ENCODE measurements at regions of chr1 and their contacts with region 1.

Region 1: GRCh38 chr1:26145041-26145959 is 13.6 kb upstream of the FAM110D start:
- DNase-seq: peak; percentile 89
- ATAC-seq: peak; percentile 93
- H3K4me3 ChIP-seq: no peak overlapping the region
- H3K27ac ChIP-seq: no peak overlapping the region
- H3K4me1 ChIP-seq: peaks cover 14 to 28% of the 10 kb centered on the region in 2 experiments
- H3K27me3 ChIP-seq: no peaks in the 10 kb centered on the region
- CTCF ChIP-seq: peak; percentile 71 to 95 (median 72)
- POLR2A ChIP-seq: no peak
- RAD21 ChIP-seq: peak; percentile 97

Region 2: DNA sequence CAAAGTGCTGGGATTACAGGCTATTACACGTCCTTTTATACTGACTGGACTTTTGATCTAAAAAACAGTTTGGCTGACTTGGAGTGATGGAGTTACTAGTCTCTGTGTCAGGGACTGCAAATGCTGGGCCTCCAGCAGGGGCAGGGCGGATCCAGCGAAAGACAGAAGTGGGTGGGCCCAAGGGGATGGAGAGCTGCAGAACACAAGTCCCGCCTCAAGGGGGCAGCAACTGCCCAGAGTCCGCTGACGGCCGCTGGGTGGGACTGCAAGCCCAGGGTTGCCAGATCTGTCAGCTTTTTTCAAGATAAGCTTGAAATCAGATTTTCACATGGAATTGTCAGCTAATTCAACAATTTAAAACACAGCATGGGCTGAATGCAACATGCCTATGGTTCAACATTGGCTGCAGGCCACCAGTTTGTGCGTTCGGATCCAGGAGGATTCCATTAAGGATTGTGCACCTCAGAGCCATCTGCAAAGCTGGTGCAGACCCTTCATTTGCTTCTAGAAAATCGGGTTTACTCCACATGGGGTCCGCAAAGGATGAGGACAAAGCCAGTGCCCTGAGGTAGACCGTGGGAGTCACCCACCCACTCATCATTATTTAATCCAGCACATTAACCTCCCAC is 249.8 kb before region 1 on chr1:
- CTCF ChIA-PET with region 1: interaction called, 14 read pairs
- POLR2A ChIA-PET with region 1: no interaction called
- RAD21 ChIA-PET with region 1: no interaction called
- intact Hi-C with region 1: loop called (anchors 10 kb)
- DNase-seq: peak; percentile 73
- ATAC-seq: peak; percentile 70
- H3K4me3 ChIP-seq: no peak overlapping the region
- H3K27ac ChIP-seq: peak overlapping the region; percentile 24
- H3K4me1 ChIP-seq: peaks cover 44 to 61% of the 10 kb centered on the region in 2 experiments
- H3K27me3 ChIP-seq: no peaks in the 10 kb centered on the region
- CTCF ChIP-seq: peak; percentile 97 to 99 (median 98)
- POLR2A ChIP-seq: no peak
- RAD21 ChIP-seq: peak; percentile 97

Region 3: DNA sequence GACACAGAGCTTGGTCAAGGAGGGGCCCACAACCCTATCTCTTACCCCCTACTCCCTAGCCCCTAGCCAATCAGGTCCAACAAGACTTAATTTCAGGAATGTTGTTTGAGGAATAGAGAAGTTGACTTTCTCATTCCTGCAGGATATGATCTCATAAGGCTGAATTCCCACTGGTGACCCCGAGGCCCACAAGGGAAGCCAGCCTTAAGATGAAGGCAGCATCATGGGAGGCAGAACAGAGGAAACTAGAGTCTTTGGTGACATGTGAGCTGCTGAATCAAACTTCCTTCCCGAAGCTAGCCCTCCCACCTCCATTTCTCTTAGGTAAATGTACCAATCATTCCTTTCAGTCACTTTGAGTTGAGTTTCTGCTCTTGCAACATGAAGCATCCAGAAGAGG is 42.8 kb before region 1 on chr1:
- CTCF ChIA-PET with region 1: interaction called, 71 read pairs
- POLR2A ChIA-PET with region 1: interaction called, 7 read pairs
- RAD21 ChIA-PET with region 1: interaction called in 1 of 2 experiments, 11 read pairs
- intact Hi-C with region 1: loop called (anchors 1 kb)
- DNase-seq: no peak
- ATAC-seq: no peak
- H3K4me3 ChIP-seq: no peak overlapping the region
- H3K27ac ChIP-seq: no peak overlapping the region
- H3K4me1 ChIP-seq: 0 out of 4 replicates have a peak, but pooled peaks cover 0 to 3% of the 10 kb centered on the region in 2 experiments
- H3K27me3 ChIP-seq: no peaks in the 10 kb centered on the region
- CTCF ChIP-seq: no peak
- POLR2A ChIP-seq: no peak
- RAD21 ChIP-seq: no peak

Region 4: GRCh38 chr1:26111530-26112406 is 33.5 kb before region 1 on chr1 and contains the start of gene PDIK1L:
- CTCF ChIA-PET with region 1: interaction called, 18 read pairs
- POLR2A ChIA-PET with region 1: interaction called, 4 read pairs
- RAD21 ChIA-PET with region 1: interaction called in 1 of 2 experiments, 5 read pairs
- intact Hi-C with region 1: loop called (anchors 1 kb)
- DNase-seq: peak; percentile 93
- ATAC-seq: peak; percentile 84
- H3K4me3 ChIP-seq: peak within 1 kb of the TSS; percentile 94 to 98
- H3K27ac ChIP-seq: peak within 1 kb of the TSS; percentile 89
- H3K4me1 ChIP-seq: peaks cover 14 to 21% of the 10 kb centered on the region in 2 experiments
- H3K27me3 ChIP-seq: no peaks in the 10 kb centered on the region
- CTCF ChIP-seq: no peak
- POLR2A ChIP-seq: peak; percentile 43
- RAD21 ChIP-seq: no peak
- total RNA-seq, gene PDIK1L: 8.8 TPM

Region 5: DNA sequence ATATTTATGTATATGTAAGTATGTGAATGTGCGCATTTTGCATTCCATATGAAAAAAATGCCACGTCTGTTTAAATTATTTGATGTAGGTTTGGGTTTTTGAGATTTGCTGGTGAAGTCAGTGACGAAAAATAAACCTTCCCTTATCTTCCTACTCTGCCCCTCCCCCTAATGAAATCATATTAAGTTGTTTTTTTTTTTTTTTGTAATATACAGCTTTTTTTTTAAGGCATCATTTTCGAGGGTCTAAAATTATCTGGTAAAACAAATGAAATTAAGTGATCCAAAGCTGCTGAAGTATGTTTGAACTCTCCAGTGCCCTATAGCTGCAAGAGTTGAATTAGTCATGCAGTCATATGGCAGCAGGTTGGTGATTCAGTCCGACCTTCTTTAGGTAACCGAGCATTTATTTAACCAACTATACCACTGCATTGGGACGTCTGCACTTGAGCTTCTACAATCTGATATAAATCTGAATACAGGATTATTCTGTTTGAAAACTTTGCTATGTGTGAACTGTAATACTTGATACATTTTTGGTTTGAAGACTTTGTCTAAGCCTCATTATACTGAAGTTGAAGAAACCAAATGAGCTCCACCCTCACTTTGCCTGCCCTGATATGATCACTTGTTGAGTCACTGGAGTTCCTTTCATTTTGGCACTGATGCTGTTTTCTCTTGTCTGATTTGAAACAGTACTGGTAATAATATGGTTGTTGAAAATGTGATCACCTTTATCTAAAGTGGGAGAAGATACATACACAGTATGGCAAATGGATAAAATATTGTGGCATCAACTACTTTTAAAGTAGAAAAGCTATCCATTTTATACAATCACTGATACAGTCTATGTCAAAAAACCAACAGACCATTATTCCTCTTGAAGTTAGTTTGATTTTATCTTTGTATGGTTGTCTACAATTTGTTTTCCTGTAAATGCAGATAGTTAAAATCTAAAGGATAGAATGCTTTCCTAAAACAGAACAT is 22.0 kb before region 1 on chr1:
- CTCF ChIA-PET with region 1: interaction called, 18 read pairs
- POLR2A ChIA-PET with region 1: interaction called, 10 read pairs
- RAD21 ChIA-PET with region 1: interaction called in 1 of 2 experiments, 5 read pairs
- intact Hi-C with region 1: no loop called
- DNase-seq: no peak
- ATAC-seq: peak; percentile 90
- H3K4me3 ChIP-seq: peak overlapping the region in 1 of 2 experiments; percentile 29; a peak in 1 of 4 replicates
- H3K27ac ChIP-seq: peak overlapping the region; percentile 26; the same call in 1 of the 2 replicates
- H3K4me1 ChIP-seq: peaks cover 13 to 44% of the 10 kb centered on the region in 2 experiments
- H3K27me3 ChIP-seq: no peaks in the 10 kb centered on the region
- CTCF ChIP-seq: no peak
- POLR2A ChIP-seq: no peak
- RAD21 ChIP-seq: no peak

Region 6: DNA sequence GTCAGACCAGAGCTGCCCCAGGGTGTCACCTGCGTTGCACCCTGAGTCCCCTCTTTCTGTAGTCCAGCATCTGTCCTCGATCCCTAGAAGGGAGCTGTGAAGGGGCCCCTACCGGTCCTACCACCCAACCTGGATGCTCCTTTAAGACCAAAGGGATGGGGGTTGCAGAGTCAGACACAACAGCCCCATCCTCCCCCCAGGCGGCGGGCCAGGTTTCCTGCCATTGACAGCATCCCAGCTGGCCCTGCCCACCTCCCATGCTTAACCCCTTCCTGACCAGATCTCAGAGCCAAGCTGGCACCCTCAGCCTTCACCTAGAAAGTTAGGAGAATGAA is 11.4 kb after region 1 on chr1:
- CTCF ChIA-PET with region 1: interaction called, 21 read pairs
- POLR2A ChIA-PET with region 1: interaction called, 5 read pairs
- RAD21 ChIA-PET with region 1: no interaction called
- intact Hi-C with region 1: no loop called
- DNase-seq: no peak
- ATAC-seq: peak; percentile 71
- H3K4me3 ChIP-seq: peak overlapping the region in 1 of 2 experiments; percentile 33; a peak in 2 of 4 replicates
- H3K27ac ChIP-seq: peak overlapping the region; percentile 30; the same call in 1 of the 2 replicates
- H3K4me1 ChIP-seq: peaks cover 13 to 36% of the 10 kb centered on the region in 2 experiments
- H3K27me3 ChIP-seq: no peaks in the 10 kb centered on the region
- CTCF ChIP-seq: no peak
- POLR2A ChIP-seq: no peak
- RAD21 ChIP-seq: no peak

Region 7: GRCh38 chr1:26169669-26170471 is 24.6 kb after region 1 on chr1 and contains the start of gene ZNF593:
- CTCF ChIA-PET with region 1: interaction called, 12 read pairs
- POLR2A ChIA-PET with region 1: no interaction called
- RAD21 ChIA-PET with region 1: no interaction called
- intact Hi-C with region 1: no loop called
- DNase-seq: peak; percentile 86
- ATAC-seq: peak; percentile 92
- H3K4me3 ChIP-seq: peak within 1 kb of the TSS; percentile 89 to 96
- H3K27ac ChIP-seq: peak within 1 kb of the TSS; percentile 74
- H3K4me1 ChIP-seq: peaks cover 4 to 22% of the 10 kb centered on the region in 2 experiments; a peak in 3 of 4 replicates
- H3K27me3 ChIP-seq: no peaks in the 10 kb centered on the region
- CTCF ChIP-seq: peak; percentile 80 to 84 (median 81)
- POLR2A ChIP-seq: no peak
- RAD21 ChIP-seq: peak; percentile 59
- total RNA-seq, gene ZNF593: 62.4 TPM

Measured in HCT116 (cell line).